Heart left ventricle (tissue), 16 donors: ENCODE measurements at regions of chr9 and their contacts with region 1.

Region 1: DNA sequence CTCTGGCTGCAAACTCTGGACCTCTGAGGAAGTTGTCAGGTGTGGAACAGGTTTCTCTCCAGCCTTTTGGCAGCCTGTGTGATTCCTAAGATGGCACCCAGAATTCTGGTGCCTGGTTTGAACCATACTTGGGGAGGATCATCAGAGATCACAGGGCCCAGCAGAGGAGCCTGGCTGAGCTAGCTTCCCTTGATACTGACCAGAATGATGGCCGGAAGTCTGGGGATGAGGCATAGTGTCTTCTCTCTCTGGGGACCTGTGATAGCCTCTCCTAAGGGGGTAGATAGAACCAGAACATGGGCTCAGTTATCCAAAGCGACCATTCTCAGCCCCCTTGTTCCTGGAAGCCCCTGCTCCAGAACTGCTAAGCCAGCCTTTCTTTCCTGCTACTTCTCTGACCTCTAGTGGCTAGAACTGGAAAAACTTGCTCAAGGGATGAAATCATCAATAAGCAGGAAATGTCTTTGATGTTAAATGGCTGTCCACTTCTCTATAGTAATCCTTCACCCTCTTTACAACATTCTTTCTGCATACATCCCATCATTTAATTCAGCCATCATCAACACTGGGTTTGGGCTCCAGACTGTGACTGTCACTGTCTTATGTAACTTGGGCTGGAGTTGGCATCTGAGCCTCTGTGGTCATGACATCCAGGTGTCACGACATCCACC is 55.1 kb downstream of the C9orf152 start:
- DNase-seq: no peak
- ATAC-seq: peak in 3 of 4 donors; percentile 4 to 29 (median 22)
- H3K4me3 ChIP-seq: no peak overlapping the region
- H3K27ac ChIP-seq: peak overlapping the region in 4 of 12 donors; percentile 12 to 58 (median 37)
- H3K4me1 ChIP-seq: peaks cover 29 to 100% (median 88%) of the 10 kb centered on the region in 12 donors
- H3K27me3 ChIP-seq: no peaks in the 10 kb centered on the region
- CTCF ChIP-seq: peak; percentile 54 to 79 (median 72)
- POLR2A ChIP-seq: no peak

Region 2: DNA sequence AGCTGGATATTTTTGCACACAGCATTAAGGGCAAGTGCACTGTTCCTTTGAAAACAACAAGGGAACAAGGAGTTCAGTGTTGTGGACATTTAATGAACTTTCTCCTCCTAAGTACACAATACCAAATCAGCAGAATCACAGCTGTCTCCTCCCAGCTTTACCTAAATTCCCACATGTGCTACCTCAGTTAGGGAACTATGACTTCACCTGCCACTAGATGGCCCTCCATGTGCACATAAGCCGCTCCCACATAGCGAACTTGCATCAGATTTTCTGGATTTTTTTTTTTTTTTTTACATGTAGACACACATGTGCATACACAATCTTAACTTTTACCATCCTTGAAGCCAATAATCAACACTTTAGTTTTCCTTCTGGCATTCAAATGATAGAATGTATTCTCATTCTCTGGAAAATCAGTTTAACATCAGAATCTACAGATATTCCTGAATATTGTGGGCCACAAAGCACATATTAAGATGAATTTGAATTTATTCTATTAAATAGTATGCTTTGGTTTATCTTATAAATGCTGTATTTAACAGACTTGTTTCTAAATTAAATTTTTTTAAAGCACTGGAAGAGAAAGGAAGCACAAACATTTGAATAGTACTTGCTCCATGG is 249.2 kb before region 1 on chr9:
- intact Hi-C with region 1: loop called (anchors 1 to 5 kb)
- DNase-seq: peak in 4 of 5 donors; percentile 47 to 64 (median 60)
- ATAC-seq: peak; percentile 24 to 66 (median 42)
- H3K4me3 ChIP-seq: no peak overlapping the region
- H3K27ac ChIP-seq: peak overlapping the region in 1 of 12 donors; percentile 3
- H3K4me1 ChIP-seq: peaks cover 9 to 68% (median 29%) of the 10 kb centered on the region in 12 donors
- H3K27me3 ChIP-seq: no peaks in the 10 kb centered on the region
- CTCF ChIP-seq: peak; percentile 63 to 90 (median 82)
- POLR2A ChIP-seq: no peak

Region 3: DNA sequence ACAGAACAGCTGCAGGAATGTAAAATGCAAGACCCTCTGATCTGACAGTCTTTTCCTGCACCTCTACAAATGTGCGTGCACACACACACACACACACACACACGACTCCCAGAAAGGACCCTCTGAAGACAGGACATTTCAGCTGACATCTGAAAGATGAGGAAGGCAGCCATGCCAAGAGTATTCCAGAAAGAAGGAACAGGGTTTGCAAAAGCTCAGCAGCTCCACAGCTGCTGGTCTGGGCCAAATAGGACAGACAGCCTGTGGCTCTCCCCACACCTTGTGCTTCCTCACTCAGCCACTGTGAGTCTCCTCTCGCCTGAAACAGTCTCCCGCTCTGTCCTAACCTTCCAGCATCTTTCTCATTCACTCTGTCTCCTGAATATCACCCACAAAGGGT is 183.8 kb before region 1 on chr9:
- intact Hi-C with region 1: loop called in 1 of 10 experiments (anchors 5 kb)
- DNase-seq: peak in 3 of 5 donors; percentile 37 to 44 (median 43)
- ATAC-seq: peak; percentile 32 to 79 (median 60)
- H3K4me3 ChIP-seq: no peak overlapping the region
- H3K27ac ChIP-seq: peak overlapping the region in 11 of 12 donors; percentile 13 to 88 (median 66)
- H3K4me1 ChIP-seq: peaks cover 0 to 67% (median 39%) of the 10 kb centered on the region in 12 donors
- H3K27me3 ChIP-seq: no peaks in the 10 kb centered on the region
- CTCF ChIP-seq: peak in 8 of 12 donors; percentile 8 to 52 (median 26)
- POLR2A ChIP-seq: no peak

Region 4: GRCh38 chr9:110048403-110048975 is 104.3 kb before region 1 on chr9:
- intact Hi-C with region 1: loop called in 2 of 10 experiments (anchors 5 to 10 kb)
- DNase-seq: peak; percentile 85 to 90 (median 90)
- ATAC-seq: peak; percentile 88 to 96 (median 95)
- H3K4me3 ChIP-seq: peak overlapping the region; percentile 72 to 91 (median 86)
- H3K27ac ChIP-seq: peak overlapping the region; percentile 35 to 91 (median 83)
- H3K4me1 ChIP-seq: peaks cover 3 to 54% (median 30%) of the 10 kb centered on the region in 12 donors
- H3K27me3 ChIP-seq: no peaks in the 10 kb centered on the region
- CTCF ChIP-seq: no peak
- POLR2A ChIP-seq: peak; percentile 68 to 90

Region 5: GRCh38 chr9:110058304-110058953 is 94.4 kb before region 1 on chr9:
- intact Hi-C with region 1: loop called in 3 of 10 experiments (anchors 5 to 10 kb)
- DNase-seq: peak in 1 of 5 donors; percentile 44
- ATAC-seq: peak; percentile 48 to 68 (median 62)
- H3K4me3 ChIP-seq: no peak overlapping the region
- H3K27ac ChIP-seq: peak overlapping the region in 8 of 12 donors; percentile 0 to 55 (median 9)
- H3K4me1 ChIP-seq: peaks cover 0 to 45% (median 36%) of the 10 kb centered on the region in 12 donors
- H3K27me3 ChIP-seq: no peaks in the 10 kb centered on the region
- CTCF ChIP-seq: peak; percentile 28 to 66 (median 48)
- POLR2A ChIP-seq: no peak

Region 6: GRCh38 chr9:110110154-110110553 is 42.7 kb before region 1 on chr9:
- intact Hi-C with region 1: loop called in 1 of 10 experiments (anchors 5 kb)
- DNase-seq: no peak
- ATAC-seq: no peak
- H3K4me3 ChIP-seq: no peak overlapping the region
- H3K27ac ChIP-seq: no peak overlapping the region
- H3K4me1 ChIP-seq: peaks cover 0 to 67% (median 49%) of the 10 kb centered on the region in 12 donors
- H3K27me3 ChIP-seq: no peaks in the 10 kb centered on the region
- CTCF ChIP-seq: no peak
- POLR2A ChIP-seq: no peak

Region 7: GRCh38 chr9:110183208-110184145 is 30.6 kb after region 1 on chr9:
- intact Hi-C with region 1: no loop called
- DNase-seq: peak in 4 of 5 donors; percentile 43 to 53 (median 48)
- ATAC-seq: peak in 3 of 4 donors; percentile 59 to 68 (median 66)
- H3K4me3 ChIP-seq: no peak overlapping the region
- H3K27ac ChIP-seq: no peak overlapping the region
- H3K4me1 ChIP-seq: peaks cover 0 to 9% (median 0%) of the 10 kb centered on the region in 12 donors
- H3K27me3 ChIP-seq: no peaks in the 10 kb centered on the region
- CTCF ChIP-seq: peak; percentile 59 to 77 (median 68)
- POLR2A ChIP-seq: no peak